PC-3 (cell line): ENCODE measurements at regions of chr16 and their contacts with region 1.

Region 1: DNA sequence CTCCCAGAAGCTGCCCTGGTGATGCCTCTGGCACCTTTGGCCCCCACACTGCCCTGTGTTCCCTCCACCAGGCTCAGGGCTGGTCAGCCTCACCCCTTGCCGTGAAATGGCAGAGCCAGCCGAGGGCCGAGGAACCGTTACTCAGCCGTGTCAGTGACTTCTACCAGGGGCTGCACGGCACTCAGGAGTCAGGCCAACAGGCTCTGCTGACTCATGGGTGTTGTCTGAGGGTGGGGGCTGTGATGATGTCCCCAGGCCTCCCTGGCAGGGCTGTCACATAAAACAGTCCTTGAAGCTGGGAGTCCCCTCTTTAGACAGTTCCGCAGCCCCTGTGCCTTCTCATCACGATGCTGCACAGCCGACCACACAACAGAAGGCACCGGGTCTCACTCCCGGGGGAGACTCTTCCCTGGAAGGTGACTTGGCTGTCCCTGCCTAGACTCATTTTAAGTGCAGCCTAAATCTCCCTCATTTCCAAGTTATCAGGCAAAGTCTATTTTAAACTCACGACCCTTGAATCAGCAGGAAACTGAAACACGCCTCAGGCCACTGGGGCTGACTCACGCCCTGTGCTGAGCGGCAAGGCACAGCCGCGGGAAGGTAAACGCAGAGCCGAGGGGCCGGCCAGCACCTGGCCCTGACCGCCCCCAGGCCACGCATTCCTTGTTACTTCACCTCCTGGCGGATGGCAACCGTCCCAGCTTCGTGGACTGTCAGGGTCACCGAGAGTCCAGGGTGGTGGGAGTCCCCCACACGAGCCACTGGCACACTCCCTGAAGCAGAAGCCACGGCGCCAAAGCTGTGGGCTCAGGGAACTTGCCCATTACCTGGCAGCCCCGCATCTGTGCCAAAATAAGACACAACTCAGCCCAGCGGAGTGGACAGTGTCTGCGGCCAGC is 102.6 kb downstream of the ZNF778 start:
- DNase-seq: peak; percentile 89
- ATAC-seq: peak; percentile 50
- H3K4me3 ChIP-seq: peak overlapping the region; percentile 66
- H3K27ac ChIP-seq: peak overlapping the region; percentile 100
- H3K4me1 ChIP-seq: peaks cover 88% of the 10 kb centered on the region
- H3K27me3 ChIP-seq: no peaks in the 10 kb centered on the region
- CTCF ChIP-seq: no peak

Region 2: DNA sequence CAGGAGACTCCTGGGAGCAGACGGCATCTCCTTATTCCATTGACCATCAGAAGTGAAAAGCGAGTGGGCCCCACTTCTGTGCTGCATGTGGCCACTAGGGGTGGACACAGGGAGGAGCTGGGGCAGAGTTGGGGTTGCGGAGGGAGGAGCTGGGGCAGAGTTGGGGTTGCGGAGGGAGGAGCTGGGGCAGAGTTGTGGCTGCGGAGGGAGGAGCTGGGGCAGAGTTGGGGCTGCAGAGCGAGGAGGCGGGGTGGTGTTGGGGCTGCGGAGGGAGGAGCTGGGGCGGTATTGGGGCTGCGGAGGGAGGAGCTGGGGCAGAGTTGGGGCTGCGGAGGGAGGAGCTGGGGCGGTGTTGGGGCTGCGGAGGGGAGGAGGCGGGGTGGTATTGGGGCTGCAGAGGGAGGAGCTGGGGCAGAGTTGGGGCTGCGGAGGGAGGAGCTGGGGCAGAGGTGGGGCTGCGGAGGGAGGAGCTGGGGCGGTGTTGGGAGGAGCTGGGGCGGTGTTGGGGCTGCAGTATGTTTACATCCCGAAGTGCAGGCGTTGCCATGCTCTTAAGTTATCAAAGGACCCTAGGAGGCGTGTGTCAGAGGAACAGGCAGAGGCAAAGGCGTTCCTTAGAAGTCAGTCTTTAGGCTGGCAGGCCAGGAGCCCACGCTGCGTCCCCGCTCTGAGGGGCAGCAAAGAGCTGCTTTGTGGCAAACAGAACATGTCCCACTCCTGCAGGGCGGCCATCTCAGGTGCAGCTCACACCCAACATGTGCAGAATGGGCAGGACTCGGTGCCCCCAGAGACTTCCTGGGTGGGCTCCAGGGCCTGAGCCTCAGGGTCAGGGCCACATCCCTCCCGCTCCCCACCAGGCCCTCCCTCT is 26.6 kb before region 1 on chr16:
- CTCF ChIA-PET with region 1: no interaction called
- POLR2A ChIA-PET with region 1: no interaction called
- intact Hi-C with region 1: no loop called
- DNase-seq: no peak
- ATAC-seq: no peak
- H3K4me3 ChIP-seq: no peak overlapping the region
- H3K27ac ChIP-seq: no peak overlapping the region
- H3K4me1 ChIP-seq: no peaks in the 10 kb centered on the region
- H3K27me3 ChIP-seq: no peaks in the 10 kb centered on the region
- CTCF ChIP-seq: 0 out of 2 replicates have a peak, but pooled peaks have one; percentile 21

Region 3: DNA sequence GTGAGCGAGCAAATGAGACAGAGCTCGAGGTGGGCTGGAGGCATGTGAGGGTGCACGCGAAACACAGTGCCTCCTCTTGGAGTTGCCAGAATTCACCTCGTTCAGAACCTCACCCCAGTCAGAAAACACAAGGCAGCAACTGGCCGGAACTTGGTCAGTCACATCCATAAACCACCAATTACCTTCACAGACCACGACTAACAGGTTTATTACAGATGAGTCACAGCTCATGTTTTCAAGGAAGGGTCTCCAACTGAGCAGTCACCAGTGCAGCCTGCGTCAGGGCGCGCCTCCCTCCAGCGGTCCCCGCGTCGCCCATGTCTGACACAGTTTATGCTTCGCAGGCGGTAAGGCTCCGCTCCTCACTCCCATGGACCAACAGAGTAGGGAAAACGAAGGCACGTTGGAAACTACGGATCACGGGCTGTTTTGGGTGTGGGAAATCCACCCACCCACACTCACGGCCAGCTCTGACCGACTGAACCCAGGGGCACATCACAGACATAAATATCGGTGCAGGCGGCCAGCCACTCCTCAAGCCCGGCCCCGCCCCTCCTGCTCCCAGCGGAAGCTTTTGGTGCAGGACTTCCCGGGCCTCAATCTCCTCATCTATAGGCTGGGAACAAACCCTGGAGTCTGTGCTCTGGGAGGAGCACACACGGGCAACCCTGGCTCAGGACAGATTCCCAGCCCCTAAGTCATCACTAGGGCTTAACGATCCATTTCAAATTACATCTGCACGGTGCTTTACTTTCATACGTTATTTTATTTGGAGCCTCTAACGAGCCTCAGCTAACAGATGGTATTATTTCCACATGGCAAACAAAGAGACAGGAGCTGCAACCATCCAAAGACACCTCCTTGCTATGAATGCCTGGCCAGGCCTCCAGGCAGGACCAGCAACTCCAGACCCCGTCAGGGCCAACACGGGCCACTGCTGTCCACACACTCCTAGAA is 23.6 kb after region 1 on chr16:
- CTCF ChIA-PET with region 1: interaction called, 16 read pairs
- POLR2A ChIA-PET with region 1: no interaction called
- intact Hi-C with region 1: no loop called
- DNase-seq: peak; percentile 89
- ATAC-seq: peak; percentile 92
- H3K4me3 ChIP-seq: peak overlapping the region; percentile 60
- H3K27ac ChIP-seq: peak overlapping the region; percentile 87
- H3K4me1 ChIP-seq: peaks cover 26% of the 10 kb centered on the region
- H3K27me3 ChIP-seq: no peaks in the 10 kb centered on the region
- CTCF ChIP-seq: peak; percentile 43

Region 4: DNA sequence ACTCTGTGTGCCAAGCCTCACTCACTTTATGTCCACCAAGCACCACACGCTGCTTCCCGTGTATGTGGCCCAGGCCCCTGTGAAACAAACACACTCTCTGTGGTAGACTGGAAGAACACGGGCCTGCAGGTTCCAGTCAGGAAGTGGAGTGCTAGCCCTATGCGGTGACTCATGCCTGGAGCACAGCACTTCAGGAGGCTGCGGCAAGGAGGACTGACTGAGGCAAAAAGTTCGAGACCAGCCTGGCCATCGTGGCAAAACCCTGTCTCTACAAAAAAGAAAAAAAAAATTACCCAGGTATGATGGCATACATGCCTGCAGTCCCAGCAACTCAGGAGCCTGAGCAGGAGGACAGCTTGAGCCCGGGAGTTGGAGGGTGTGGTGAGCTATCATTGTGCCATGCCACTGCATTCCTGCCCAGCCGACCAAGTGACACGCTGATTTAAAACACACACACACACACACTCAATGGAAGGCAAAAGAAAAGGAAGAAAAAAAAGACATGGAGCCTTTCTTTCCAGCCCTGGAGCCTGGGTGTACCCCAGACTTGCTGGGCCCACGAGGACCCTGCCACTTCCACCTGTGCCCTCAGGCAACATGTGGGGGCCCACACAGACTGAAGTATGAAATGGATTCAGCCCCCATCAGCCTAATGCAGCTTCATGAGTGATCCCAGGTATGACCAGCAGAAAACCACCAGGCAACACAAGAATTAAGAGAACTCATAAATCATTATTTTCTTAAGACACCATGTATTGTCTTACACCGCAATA is 43.7 kb after region 1 on chr16:
- CTCF ChIA-PET with region 1: interaction called, 3 read pairs
- POLR2A ChIA-PET with region 1: interaction called, 3 read pairs
- intact Hi-C with region 1: loop called (anchors 2 kb)
- DNase-seq: peak; percentile 59
- ATAC-seq: peak; percentile 73
- H3K4me3 ChIP-seq: peak overlapping the region; percentile 17; the same call in 1 of the 2 replicates
- H3K27ac ChIP-seq: peak overlapping the region; percentile 97
- H3K4me1 ChIP-seq: peaks cover 26% of the 10 kb centered on the region
- H3K27me3 ChIP-seq: no peaks in the 10 kb centered on the region
- CTCF ChIP-seq: no peak

Region 5: DNA sequence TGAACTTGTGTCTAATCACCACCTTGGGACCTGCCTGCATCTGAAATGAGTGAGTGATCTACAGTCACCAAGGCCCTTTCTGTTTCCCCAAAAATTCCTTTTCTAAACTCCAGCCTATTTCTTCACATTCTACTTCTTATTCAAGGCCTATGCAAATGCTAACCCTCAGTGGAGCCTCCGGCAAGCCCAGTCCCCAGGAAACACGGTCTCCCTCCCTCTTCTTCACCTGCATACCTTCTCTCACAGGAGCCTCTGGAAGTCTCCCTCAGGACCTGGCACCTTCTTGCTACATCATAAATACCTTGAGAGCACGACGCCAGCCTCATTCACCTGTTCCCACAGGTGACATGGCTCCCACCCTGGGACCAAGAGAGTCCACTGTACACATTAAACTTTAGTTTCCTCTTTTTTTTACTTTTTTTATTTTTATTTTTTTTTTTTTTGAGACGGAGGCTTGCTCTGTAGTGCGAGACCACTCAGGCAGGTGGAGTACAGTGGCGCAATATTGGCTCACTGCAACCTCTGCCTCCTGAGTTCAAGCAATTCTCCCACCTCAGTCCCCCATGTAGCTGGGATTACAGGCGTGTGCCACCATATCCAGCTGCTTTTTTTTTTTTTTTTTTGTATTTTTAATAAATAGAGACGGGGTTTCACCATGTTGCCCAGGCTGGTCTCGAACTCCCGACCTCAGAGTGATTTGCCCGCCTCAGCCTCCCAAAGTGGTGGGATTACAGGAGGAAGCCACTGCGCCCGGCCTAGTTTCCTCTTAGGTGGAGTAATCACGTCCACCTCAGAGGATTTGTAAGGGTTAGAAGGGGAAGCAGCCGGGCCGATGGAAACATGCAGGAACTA is 73.0 kb after region 1 on chr16:
- CTCF ChIA-PET with region 1: no interaction called
- POLR2A ChIA-PET with region 1: no interaction called
- intact Hi-C with region 1: no loop called
- DNase-seq: no peak
- ATAC-seq: no peak
- H3K4me3 ChIP-seq: no peak overlapping the region
- H3K27ac ChIP-seq: no peak overlapping the region
- H3K4me1 ChIP-seq: peaks cover 18% of the 10 kb centered on the region
- H3K27me3 ChIP-seq: no peaks in the 10 kb centered on the region
- CTCF ChIP-seq: no peak

Region 6: DNA sequence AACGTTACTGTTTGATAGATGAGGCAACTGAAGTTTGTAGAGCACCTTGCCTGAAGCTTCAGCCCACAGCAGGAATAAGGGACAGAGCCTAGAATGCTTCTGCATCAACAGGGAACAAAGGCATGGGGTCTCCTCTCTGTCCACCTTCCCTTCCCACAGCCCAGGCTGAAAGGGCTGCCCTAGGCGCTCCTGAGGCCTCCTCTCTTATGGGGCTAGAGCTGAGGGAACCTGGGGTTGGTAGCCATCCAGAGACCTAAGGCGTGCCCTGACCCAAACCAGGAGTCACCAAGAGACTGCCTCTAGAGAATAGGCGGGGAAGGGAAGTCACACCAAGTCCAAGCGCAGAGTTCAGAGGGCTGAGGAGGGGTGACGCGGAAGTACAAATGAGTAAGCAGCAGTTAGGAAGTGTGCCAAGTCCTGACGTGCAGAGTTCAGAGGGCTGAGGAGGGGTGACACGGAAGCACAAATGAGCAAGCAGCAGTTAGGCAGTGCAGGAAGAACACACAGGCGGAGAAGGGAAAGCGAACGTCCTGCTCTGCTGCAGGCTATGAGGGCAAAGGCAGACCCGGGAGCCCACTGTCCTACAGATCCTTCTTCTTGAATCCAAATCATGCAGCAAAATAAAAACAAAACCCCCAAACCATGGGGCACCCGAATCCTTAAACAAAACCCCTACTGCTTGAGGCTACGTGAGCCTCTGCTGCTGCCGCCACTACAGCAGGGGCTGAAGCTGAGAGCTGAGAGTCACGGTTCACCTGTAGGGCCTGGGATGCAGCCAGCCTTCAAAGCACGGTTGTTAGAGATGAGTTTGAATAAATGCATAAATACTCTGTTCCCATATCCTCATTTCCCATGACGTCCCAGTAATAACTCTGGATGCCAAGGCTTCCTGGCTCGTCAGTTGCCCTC is 185.3 kb after region 1 on chr16:
- CTCF ChIA-PET with region 1: no interaction called
- POLR2A ChIA-PET with region 1: no interaction called
- intact Hi-C with region 1: loop called (anchors 5 kb)
- DNase-seq: peak; percentile 90
- ATAC-seq: peak; percentile 32
- H3K4me3 ChIP-seq: peak overlapping the region; percentile 23; the same call in 1 of the 2 replicates
- H3K27ac ChIP-seq: peak overlapping the region; percentile 89
- H3K4me1 ChIP-seq: peaks cover 39% of the 10 kb centered on the region
- H3K27me3 ChIP-seq: no peaks in the 10 kb centered on the region
- CTCF ChIP-seq: no peak